ENCODE measurements at regions of chr12 and their contacts with region 1.

Region 1: DNA sequence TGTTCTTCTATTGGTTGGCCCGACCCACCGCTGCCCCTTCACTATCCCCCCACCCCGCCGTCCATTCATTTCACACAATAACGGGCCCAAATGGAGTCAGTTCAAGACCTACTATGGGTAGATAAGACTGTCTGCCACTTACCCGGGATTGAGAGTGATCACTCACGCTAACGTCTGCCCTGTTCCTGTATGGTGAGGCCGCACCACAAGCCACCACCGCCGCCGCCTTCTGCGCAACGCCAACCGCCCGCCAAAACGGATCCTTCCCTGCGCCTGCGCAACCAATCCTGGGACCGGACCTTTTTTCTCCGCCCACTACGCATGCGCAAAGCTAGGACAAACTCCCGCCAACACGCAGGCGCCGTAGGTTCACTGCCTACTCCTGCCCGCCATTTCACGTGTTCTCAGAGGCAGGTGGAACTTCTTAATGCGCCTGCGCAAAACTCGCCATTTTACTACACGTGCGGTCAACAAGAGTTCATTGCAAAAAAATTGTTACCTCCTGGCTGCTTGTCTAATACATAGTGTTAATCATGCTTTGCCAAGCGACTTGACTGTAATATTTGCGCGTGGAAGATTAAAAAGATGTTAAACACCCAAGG is at the start of gene CBX5:
- DNase-seq: peak; percentile 99
- ATAC-seq: peak; percentile 81
- total RNA-seq, gene CBX5: 43.0 TPM

Region 2: DNA sequence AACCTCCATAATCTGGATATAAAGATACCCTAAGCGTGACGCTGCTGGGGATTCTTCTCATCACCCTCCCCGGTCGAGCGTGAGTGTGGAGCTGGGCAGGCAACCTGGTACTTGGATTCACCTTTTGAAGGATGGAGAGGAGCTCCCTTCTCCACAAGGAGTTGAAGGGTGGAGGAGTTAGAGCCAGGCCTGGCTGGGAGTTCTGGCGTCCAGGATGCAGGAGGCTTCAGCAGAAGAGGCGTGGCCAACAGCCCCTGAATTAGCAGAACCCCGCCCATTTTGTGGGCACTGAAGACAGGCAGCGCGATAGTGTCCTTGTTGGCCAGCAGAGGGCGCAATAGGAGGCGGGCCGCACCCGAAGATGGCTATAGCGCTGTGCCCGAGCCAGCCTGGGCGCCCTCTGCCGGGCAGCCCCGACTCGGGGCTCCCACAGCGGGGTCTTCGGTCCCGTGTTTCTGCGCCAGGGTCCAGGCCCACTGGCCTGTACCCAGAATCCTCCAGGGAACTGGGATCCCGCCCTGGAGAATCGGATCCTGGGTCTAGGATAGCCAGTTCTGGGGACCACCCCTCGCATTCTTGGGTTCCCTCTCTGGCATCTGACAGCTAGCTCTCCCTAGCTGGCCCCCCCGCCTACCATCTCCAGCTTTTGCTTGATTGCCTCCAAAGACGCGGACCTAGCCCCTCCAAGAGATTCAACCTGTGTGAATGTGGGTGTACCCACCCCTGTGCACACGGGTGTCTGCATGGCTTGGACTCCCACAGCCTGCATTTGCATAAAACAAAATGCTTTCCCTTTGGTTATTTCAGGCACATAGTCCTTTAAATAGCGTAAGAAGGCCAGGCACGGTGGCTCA is 65.2 kb before region 1 on chr12:
- intact Hi-C with region 1: loop called (anchors 5 kb)
- DNase-seq: peak; percentile 93
- ATAC-seq: peak; percentile 82

Region 3: DNA sequence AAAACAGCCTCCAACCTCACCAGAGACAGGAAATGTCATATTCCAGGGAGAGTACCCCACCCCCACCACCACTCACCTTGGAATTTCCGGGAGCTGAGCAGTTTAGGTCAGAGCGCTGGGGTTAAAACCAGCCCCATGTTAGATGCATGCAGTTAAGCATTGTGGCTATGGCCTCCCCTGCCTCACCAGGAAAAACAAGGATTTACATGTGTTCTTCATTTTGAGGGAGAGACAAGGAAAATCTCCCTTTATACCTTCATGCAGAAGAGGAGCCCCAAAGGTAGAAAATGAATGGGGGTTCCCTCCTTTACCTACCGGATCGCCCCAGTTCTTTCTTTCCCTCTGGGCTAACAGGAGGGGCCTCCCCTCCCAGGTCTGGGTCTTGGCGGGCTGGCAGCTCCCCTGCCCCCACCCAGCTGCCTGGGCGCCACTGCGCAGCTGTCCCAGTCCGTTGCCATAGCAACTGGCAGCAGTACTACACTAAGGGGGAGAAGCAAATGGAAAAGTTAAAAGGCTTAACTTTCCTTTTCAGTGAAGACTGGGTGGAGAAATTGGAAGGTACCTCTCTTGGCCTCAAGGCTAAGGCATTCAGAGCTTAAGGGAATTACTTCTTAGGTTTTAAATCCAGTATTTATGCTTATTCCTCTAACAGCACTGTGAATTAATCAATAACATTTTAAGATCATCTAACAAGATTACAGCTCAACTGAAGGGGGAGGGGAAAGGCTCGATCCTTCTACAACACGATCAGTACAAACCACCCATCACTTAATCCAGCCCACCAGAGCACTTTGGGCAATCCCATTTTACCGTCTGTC is 20.6 kb before region 1 on chr12:
- intact Hi-C with region 1: loop called (anchors 2 kb)
- DNase-seq: peak; percentile 80
- ATAC-seq: peak; percentile 90

Region 4: DNA sequence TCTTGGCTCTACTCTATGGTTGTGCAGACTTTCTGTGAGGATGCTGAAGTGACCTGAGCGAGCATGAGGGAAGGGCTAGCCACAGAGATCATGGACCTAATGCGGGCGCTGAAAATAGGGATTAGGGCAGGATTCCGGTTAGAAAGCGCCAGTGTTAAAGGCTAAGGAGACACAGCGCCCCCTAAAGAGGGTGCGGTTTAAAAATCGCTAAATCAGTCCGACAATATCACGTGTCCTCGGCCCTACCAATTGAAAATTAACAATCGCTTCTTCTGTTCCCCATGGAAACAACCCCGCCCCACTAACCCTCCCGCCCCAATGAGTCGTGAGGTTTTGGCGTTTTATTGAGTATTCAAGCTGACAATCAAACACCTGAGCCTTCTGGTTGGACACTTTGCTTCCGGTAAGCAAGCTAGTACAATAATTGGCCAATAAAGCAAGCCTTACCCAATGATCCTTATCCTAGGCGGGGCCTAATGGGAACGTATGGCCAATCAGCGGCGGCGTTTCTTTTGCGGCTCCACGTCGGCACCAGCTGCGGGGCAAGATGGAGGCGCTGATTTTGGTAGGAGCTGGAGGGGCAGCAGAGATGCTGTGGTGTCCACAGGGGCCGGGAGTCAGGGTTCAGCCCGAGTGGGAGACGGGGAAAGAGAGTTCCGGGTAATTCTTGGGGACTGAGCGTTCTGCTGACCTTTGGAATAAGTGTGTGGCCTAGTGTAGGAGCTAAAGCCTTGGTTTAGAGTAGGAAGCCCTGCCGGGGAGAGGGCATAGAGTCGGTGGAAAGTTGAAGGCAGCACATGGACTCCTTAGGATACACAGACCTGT is 44.9 kb after region 1 on chr12 and contains the start of gene COPZ1:
- intact Hi-C with region 1: loop called (anchors 1 kb)
- DNase-seq: peak; percentile 96
- ATAC-seq: peak; percentile 98
- total RNA-seq, gene COPZ1: 130 TPM

Region 5: GRCh38 chr12:54368709-54369583 is 89.0 kb after region 1 on chr12:
- intact Hi-C with region 1: loop called (anchors 5 kb)
- DNase-seq: peak; percentile 94
- ATAC-seq: peak; percentile 62

Measured in Right ventricle myocardium inferior (tissue), 1 donor.